B cell (primary cell): ENCODE measurements at regions of chr6 and their contacts with region 1.

Region 1: DNA sequence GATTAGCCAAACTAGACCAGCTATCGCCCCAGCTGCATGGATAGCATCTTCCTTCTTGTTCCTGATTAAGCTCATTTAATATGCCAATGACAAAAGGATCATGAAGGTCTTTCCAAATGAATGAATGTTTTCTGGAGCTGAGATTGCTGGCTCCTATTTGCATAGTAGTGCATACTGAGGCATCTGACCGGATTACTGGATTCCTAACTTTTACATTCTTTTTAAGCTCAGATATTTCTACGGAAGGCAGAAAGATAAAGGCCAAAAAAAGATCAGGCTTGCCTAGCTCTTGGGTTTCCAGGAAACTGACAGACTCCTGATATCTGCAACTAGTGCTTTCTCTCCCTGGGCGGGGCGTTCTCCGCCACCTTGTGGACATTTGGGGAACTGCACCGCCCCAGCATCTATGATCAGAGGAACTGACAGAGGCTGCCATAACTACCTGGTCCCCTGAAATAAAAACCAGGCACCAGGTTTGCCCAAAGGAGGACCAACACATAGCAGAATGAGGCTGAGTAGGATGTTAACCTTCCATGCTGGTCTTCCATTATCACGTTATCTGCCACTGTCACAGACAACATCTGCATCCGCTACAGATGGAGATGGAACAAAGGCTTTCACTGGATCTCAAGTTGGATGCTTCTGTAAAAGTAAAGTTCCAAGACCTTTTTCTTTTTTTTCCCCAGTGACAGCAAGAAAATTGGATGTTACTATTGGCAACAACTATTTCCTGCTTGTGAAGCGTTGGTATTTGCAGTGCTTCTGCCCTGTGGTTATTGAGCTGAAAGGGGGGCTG is 33.2 kb downstream of the NT5E start:
- DNase-seq: peak; percentile 71
- ATAC-seq: peak; percentile 88
- H3K4me3 ChIP-seq: no peak overlapping the region
- H3K4me3 Mint-ChIP-seq: no peak overlapping the region
- H3K27ac ChIP-seq: no peak overlapping the region
- H3K27ac Mint-ChIP-seq: no peak overlapping the region
- H3K4me1 ChIP-seq: peaks cover 3 to 4% of the 10 kb centered on the region in 2 donors
- H3K4me1 Mint-ChIP-seq: peaks cover 15% of the 10 kb centered on the region
- H3K27me3 ChIP-seq: no peaks in the 10 kb centered on the region
- H3K27me3 Mint-ChIP-seq: no peaks in the 10 kb centered on the region
- CTCF ChIP-seq: peak; percentile 99

Region 2: GRCh38 chr6:85354761-85355618 is 128.1 kb before region 1 on chr6:
- CTCF ChIA-PET with region 1: interaction called, 224 read pairs
- POLR2A ChIA-PET with region 1: no interaction called
- intact Hi-C with region 1: loop called (anchors 1 kb)
- DNase-seq: peak; percentile 56
- ATAC-seq: peak; percentile 73
- H3K4me3 ChIP-seq: no peak overlapping the region
- H3K4me3 Mint-ChIP-seq: no peak overlapping the region
- H3K27ac ChIP-seq: no peak overlapping the region
- H3K27ac Mint-ChIP-seq: no peak overlapping the region
- H3K4me1 ChIP-seq: no peaks in the 10 kb centered on the region
- H3K4me1 Mint-ChIP-seq: no peaks in the 10 kb centered on the region
- H3K27me3 ChIP-seq: no peaks in the 10 kb centered on the region
- H3K27me3 Mint-ChIP-seq: peaks cover 4% of the 10 kb centered on the region
- CTCF ChIP-seq: peak; percentile 98

Region 3: GRCh38 chr6:85372188-85372914 is 110.8 kb before region 1 on chr6:
- CTCF ChIA-PET with region 1: interaction called, 20 read pairs
- POLR2A ChIA-PET with region 1: no interaction called
- intact Hi-C with region 1: loop called (anchors 1 kb)
- DNase-seq: no peak
- ATAC-seq: no peak
- H3K4me3 ChIP-seq: no peak overlapping the region
- H3K4me3 Mint-ChIP-seq: no peak overlapping the region
- H3K27ac ChIP-seq: no peak overlapping the region
- H3K27ac Mint-ChIP-seq: no peak overlapping the region
- H3K4me1 ChIP-seq: no peaks in the 10 kb centered on the region
- H3K4me1 Mint-ChIP-seq: peaks cover 3% of the 10 kb centered on the region
- H3K27me3 ChIP-seq: no peaks in the 10 kb centered on the region
- H3K27me3 Mint-ChIP-seq: peaks cover 3% of the 10 kb centered on the region
- CTCF ChIP-seq: peak; percentile 21

Region 4: GRCh38 chr6:85449818-85450759 is 33.0 kb before region 1 on chr6 and contains the start of gene NT5E:
- CTCF ChIA-PET with region 1: interaction called, 87 read pairs
- POLR2A ChIA-PET with region 1: no interaction called
- intact Hi-C with region 1: loop called (anchors 1 kb)
- DNase-seq: peak; percentile 49
- ATAC-seq: peak; percentile 79
- H3K4me3 ChIP-seq: peak within 1 kb of the TSS; percentile 34 to 83 (median 65)
- H3K4me3 Mint-ChIP-seq: peak within 1 kb of the TSS; percentile 91
- H3K27ac ChIP-seq: peak within 1 kb of the TSS; percentile 72 to 86
- H3K27ac Mint-ChIP-seq: peak within 1 kb of the TSS; percentile 90
- H3K4me1 ChIP-seq: peaks cover 30 to 53% of the 10 kb centered on the region in 2 donors
- H3K4me1 Mint-ChIP-seq: peaks cover 60% of the 10 kb centered on the region
- H3K27me3 ChIP-seq: peaks cover 0 to 27% (median 4%) of the 10 kb centered on the region in 4 experiments
- H3K27me3 Mint-ChIP-seq: peaks cover 12% of the 10 kb centered on the region
- CTCF ChIP-seq: no peak
- total RNA-seq, gene NT5E: 23.2 and 24.8 TPM in 2 replicates

Region 5: GRCh38 chr6:85472749-85473148 is 10.4 kb before region 1 on chr6:
- CTCF ChIA-PET with region 1: interaction called, 14 read pairs
- POLR2A ChIA-PET with region 1: no interaction called
- intact Hi-C with region 1: no loop called
- DNase-seq: no peak
- ATAC-seq: no peak
- H3K4me3 ChIP-seq: no peak overlapping the region
- H3K4me3 Mint-ChIP-seq: no peak overlapping the region
- H3K27ac ChIP-seq: no peak overlapping the region
- H3K27ac Mint-ChIP-seq: no peak overlapping the region
- H3K4me1 ChIP-seq: no peaks in the 10 kb centered on the region
- H3K4me1 Mint-ChIP-seq: peaks cover 1% of the 10 kb centered on the region
- H3K27me3 ChIP-seq: no peaks in the 10 kb centered on the region
- H3K27me3 Mint-ChIP-seq: no peaks in the 10 kb centered on the region
- CTCF ChIP-seq: no peak